ENCODE measurements at regions of chr7 and their contacts with region 1.

Region 1: DNA sequence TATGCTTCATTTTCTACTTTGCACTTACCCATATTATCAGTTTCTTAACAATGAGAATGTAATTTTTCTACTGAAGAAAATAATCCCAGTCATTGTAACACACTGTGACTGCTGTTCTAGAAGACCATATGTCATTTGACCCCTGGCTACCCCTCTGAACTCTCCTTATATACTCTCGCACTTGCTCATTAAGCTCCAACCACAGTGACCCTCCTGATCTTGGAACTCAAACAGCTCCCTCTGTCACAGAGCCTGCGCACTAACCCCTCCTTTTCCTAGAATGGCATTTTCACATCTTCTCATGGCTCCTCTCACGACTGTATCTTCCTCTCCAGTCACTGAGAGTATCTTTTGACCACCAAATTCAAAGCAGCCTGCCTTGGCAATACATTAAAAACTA is 169.7 kb downstream of the CACNA2D1 start:
- DNase-seq: no peak
- ATAC-seq: no peak
- H3K4me3 ChIP-seq: no peak overlapping the region
- H3K27ac ChIP-seq: no peak overlapping the region
- H3K4me1 ChIP-seq: no peaks in the 10 kb centered on the region
- H3K27me3 ChIP-seq: no peaks in the 10 kb centered on the region
- CTCF ChIP-seq: no peak
- POLR2A ChIP-seq: no peak
- RAD21 ChIP-seq: no peak

Region 2: DNA sequence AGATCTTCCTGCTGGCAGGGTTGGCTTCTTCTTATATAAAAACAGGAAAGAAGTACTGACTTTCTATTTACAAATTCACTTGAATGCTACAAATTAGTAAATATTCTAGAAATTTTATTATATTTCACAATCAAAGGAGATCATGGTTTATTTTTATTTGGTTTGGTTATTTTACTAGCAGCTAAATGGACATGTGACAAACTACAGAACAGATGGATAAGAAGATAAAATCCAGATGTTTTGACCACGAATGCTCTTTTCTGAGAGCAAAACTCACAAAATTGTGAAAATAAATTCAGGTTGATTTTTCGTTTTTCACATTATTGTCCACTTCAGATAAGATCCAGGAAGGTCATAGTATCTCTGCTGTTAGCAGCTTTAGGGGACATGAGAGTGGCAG is 114.3 kb after region 1 on chr7:
- CTCF ChIA-PET with region 1: interaction called, 3 read pairs
- POLR2A ChIA-PET with region 1: no interaction called
- dilution Hi-C with region 1: no loop called
- in situ Hi-C with region 1: no loop called
- intact Hi-C with region 1: loop called (anchors 5 kb)
- DNase-seq: no peak
- ATAC-seq: no peak
- H3K4me3 ChIP-seq: no peak overlapping the region
- H3K27ac ChIP-seq: no peak overlapping the region
- H3K4me1 ChIP-seq: peaks cover 3% of the 10 kb centered on the region; the same call in 1 of the 2 replicates
- H3K27me3 ChIP-seq: no peaks in the 10 kb centered on the region
- CTCF ChIP-seq: no peak
- POLR2A ChIP-seq: no peak
- RAD21 ChIP-seq: no peak